ENCODE measurements at regions of chr5 and their contacts with region 1.

Region 1: GRCh38 chr5:68272289-68272688 is 56.7 kb downstream of the PIK3R1 start:
- DNase-seq: peak; percentile 40 to 59 (median 58)
- H3K4me3 ChIP-seq: no peak overlapping the region
- H3K27ac ChIP-seq: no peak overlapping the region
- H3K4me1 ChIP-seq: peaks cover 18 to 52% (median 36%) of the 10 kb centered on the region in 4 experiments
- H3K27me3 ChIP-seq: no peaks in the 10 kb centered on the region

Region 2: DNA sequence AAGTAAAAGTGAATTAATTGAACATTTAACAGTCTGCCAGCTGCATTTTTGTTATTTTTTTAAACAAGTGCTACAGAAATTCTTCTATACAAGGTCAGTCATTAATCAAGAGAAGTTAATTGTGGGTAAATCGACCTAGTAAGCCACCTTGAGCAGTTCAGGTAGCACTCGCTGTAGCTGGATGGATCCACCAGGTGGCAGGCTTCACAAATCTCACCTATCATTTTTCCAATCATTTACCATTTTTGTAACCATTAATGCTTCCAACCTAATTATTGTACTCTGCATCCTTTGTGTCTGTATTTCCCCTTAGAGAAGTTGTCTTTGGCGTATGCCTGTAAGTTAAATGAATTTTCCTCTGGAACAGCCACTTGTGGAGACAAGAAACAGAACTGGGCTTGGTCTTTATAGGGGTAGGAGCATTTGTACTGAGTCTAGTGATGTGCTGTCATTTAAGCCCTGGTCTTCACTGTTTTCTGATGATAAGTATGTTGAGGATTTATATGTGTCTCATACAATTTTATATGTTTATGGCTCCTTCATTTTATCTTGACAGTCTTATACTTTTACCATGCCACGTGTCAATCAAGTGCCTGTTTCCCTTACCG is 1115.2 kb before region 1 on chr5:
- CTCF ChIA-PET with region 1: interaction called, 19 read pairs
- POLR2A ChIA-PET with region 1: no interaction called
- DNase-seq: peak; percentile 52 to 64 (median 55)
- H3K4me3 ChIP-seq: no peak overlapping the region
- H3K27ac ChIP-seq: no peak overlapping the region
- H3K4me1 ChIP-seq: no peaks in the 10 kb centered on the region
- H3K27me3 ChIP-seq: no peaks in the 10 kb centered on the region

Region 3: DNA sequence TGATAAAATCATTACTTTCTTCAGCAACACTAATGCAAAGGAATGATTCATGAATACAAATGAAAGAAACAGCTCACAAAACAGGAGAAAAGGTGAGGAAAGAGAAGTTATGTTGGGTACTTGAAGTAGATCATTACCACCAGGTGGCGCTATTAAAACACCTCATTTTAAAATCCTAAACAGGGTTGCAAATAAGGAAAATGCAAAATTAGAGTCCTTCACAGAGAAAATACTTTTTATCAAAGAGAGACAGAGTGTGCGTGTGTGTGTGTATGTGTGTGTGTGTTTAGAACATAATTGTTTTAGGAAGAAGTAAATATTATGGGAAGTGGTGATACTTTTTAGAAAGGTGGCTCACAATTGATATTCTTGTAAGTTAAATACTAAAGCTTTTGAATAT is 1026.2 kb before region 1 on chr5:
- CTCF ChIA-PET with region 1: interaction called, 40 read pairs
- POLR2A ChIA-PET with region 1: interaction called, 4 read pairs
- DNase-seq: peak; percentile 83 to 91 (median 86)
- H3K4me3 ChIP-seq: no peak overlapping the region
- H3K27ac ChIP-seq: no peak overlapping the region
- H3K4me1 ChIP-seq: peaks cover 5 to 19% (median 12%) of the 10 kb centered on the region in 4 experiments
- H3K27me3 ChIP-seq: no peaks in the 10 kb centered on the region

Region 4: DNA sequence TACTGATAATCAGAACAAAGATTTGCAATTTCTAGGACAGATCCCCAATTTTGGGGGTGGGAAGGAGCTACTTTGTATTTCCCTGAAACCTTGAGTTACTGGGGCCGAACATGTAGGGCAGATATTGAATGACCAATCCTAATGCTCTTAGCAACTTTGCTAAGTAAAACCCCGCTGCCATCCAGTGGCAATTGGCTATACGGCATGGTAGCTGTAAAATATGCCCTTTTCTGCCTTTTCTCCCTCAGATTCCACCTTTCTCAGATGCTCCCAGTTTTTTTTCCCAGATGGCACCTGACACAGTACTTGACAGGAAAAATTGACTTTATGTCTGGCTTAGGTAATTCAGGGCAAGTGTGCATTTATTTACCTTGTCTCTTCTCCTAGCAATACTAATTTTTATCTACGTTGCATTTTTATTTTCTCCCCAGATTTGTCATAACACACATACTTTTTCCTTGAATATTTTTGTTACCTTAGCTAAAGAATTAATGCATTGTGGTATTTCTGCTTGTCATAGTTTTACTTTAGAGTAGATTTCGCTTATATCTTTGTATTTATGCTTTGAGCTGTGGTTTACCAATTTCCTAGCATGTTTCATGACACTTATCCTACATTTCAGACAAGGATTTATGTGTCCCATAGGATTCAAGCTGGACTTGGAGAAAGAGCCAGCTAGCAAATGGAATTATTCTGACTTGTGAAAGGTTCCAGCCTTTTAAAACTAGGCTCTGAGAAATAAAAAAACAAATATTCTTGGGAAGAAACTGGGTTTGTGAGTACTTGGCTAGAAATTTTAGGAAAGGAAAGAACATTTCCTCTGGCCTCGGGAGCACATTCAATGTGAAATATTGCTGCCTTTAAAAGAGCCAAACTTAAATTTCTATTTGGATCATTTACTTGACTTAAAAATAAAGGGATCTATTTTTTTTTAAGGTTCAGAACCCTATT is 19.3 kb before region 1 on chr5:
- CTCF ChIA-PET with region 1: interaction called, 78 read pairs
- POLR2A ChIA-PET with region 1: interaction called, 4 read pairs
- DNase-seq: peak; percentile 66 to 81 (median 78)
- H3K4me3 ChIP-seq: no peak overlapping the region
- H3K27ac ChIP-seq: peak overlapping the region; percentile 25 to 43
- H3K4me1 ChIP-seq: peaks cover 52 to 94% (median 81%) of the 10 kb centered on the region in 4 experiments
- H3K27me3 ChIP-seq: no peaks in the 10 kb centered on the region

Region 5: GRCh38 chr5:68260467-68260866 is 11.8 kb before region 1 on chr5:
- CTCF ChIA-PET with region 1: interaction called, 78 read pairs
- POLR2A ChIA-PET with region 1: interaction called, 4 read pairs
- DNase-seq: peak in 1 of 3 donors; percentile 57
- H3K4me3 ChIP-seq: no peak overlapping the region
- H3K27ac ChIP-seq: no peak overlapping the region
- H3K4me1 ChIP-seq: peaks cover 25 to 87% (median 68%) of the 10 kb centered on the region in 4 experiments
- H3K27me3 ChIP-seq: no peaks in the 10 kb centered on the region

Region 6: GRCh38 chr5:68287976-68288706 is 15.9 kb after region 1 on chr5:
- CTCF ChIA-PET with region 1: interaction called, 12 read pairs
- POLR2A ChIA-PET with region 1: no interaction called
- DNase-seq: peak in 2 of 3 donors; percentile 57 to 68
- H3K4me3 ChIP-seq: peak overlapping the region; percentile 35 to 89 (median 60)
- H3K27ac ChIP-seq: peak overlapping the region in 1 of 2 experiments; percentile 59
- H3K4me1 ChIP-seq: peaks cover 13 to 30% (median 24%) of the 10 kb centered on the region in 4 experiments
- H3K27me3 ChIP-seq: no peaks in the 10 kb centered on the region